ENCODE measurements at regions of chr12 and their contacts with region 1.

Region 1: GRCh38 chr12:21725754-21726153 is 48.8 kb downstream of the KCNJ8 start:
- DNase-seq: no peak
- ATAC-seq: no peak
- H3K4me3 ChIP-seq: no peak overlapping the region
- H3K27ac ChIP-seq: no peak overlapping the region
- H3K4me1 ChIP-seq: no peaks in the 10 kb centered on the region
- H3K27me3 ChIP-seq: no peaks in the 10 kb centered on the region
- CTCF ChIP-seq: no peak
- EP300 ChIP-seq: no peak
- POLR2A ChIP-seq: no peak
- RAD21 ChIP-seq: no peak

Region 2: DNA sequence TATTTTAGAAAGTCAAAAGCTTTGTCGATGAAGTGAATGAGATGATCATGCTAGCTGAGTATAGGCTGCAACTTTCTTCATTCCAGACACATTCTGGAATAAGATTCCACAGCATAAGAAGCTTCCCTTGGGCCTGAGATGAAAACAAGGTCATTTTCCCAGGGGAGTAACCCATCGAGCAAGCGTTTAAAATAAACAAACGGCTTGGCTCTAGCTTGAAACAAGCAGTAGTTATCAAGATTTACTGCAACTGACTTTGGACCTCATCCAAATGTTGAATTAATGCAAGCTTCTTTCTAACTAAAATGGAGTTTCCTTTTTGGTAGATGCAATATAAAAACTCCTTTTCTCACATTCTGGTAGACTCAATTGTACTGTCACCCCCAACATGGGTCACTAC is 25.8 kb after region 1 on chr12:
- CTCF ChIA-PET with region 1: no interaction called
- POLR2A ChIA-PET with region 1: no interaction called
- in situ Hi-C with region 1: no loop called
- intact Hi-C with region 1: loop called (anchors 1 kb)
- DNase-seq: no peak
- ATAC-seq: no peak
- H3K4me3 ChIP-seq: no peak overlapping the region
- H3K27ac ChIP-seq: no peak overlapping the region
- H3K4me1 ChIP-seq: no peaks in the 10 kb centered on the region
- H3K27me3 ChIP-seq: no peaks in the 10 kb centered on the region
- CTCF ChIP-seq: no peak
- EP300 ChIP-seq: no peak
- POLR2A ChIP-seq: no peak
- RAD21 ChIP-seq: no peak

Region 3: GRCh38 chr12:23569356-23569755 is 1843.6 kb after region 1 on chr12:
- CTCF ChIA-PET with region 1: no interaction called
- POLR2A ChIA-PET with region 1: no interaction called
- in situ Hi-C with region 1: no loop called
- intact Hi-C with region 1: no loop called
- DNase-seq: no peak
- ATAC-seq: no peak
- H3K4me3 ChIP-seq: no peak overlapping the region
- H3K27ac ChIP-seq: no peak overlapping the region
- H3K4me1 ChIP-seq: no peaks in the 10 kb centered on the region
- H3K27me3 ChIP-seq: no peaks in the 10 kb centered on the region
- CTCF ChIP-seq: no peak
- EP300 ChIP-seq: no peak
- POLR2A ChIP-seq: no peak
- RAD21 ChIP-seq: no peak